Common myeloid progenitor, CD34-positive (primary cell): ENCODE measurements at regions of chr15 and their contacts with region 1.

Region 1: GRCh38 chr15:74044267-74045110 is 37.9 kb downstream of the GOLGA6A start:
- DNase-seq: no peak
- H3K4me3 ChIP-seq: no peak overlapping the region
- H3K27ac ChIP-seq: no peak overlapping the region
- H3K4me1 ChIP-seq: peaks cover 0 to 17% (median 8%) of the 10 kb centered on the region in 4 experiments
- H3K27me3 ChIP-seq: no peaks in the 10 kb centered on the region

Region 2: GRCh38 chr15:74027688-74028087 is 16.8 kb before region 1 on chr15:
- CTCF ChIA-PET with region 1: interaction called, 10 read pairs
- POLR2A ChIA-PET with region 1: no interaction called
- DNase-seq: no peak
- H3K4me3 ChIP-seq: no peak overlapping the region
- H3K27ac ChIP-seq: no peak overlapping the region
- H3K4me1 ChIP-seq: peaks cover 0 to 9% (median 5%) of the 10 kb centered on the region in 4 experiments
- H3K27me3 ChIP-seq: no peaks in the 10 kb centered on the region